ENCODE measurements at regions of chr4 and their contacts with region 1.

Region 1: DNA sequence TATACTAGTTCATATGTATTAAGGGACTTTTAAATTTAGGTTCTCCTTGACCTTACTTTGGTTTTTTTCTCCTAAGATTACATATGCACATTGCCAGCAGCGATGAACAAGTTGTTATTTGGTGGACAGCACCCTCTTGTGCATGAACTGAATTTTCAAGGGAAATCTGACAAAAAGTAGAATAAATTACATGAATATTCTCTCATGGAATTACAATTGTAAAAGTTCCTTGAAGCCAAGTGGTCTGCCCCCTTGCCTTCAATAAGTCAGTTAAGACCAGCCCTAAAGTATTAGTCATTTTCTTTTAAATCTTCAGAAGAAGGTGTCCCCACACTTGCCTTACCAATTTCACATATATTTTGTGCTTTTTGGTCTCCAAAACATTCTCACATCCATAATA is 30.7 kb upstream of the SMARCA5 start:
- DNase-seq: peak; percentile 74
- ATAC-seq: peak; percentile 49
- H3K4me3 ChIP-seq: no peak overlapping the region
- H3K27ac ChIP-seq: no peak overlapping the region
- H3K4me1 ChIP-seq: no peaks in the 10 kb centered on the region
- H3K27me3 ChIP-seq: no peaks in the 10 kb centered on the region
- CTCF ChIP-seq: peak; percentile 86

Region 2: GRCh38 chr4:143207557-143207956 is 275.3 kb before region 1 on chr4:
- CTCF ChIA-PET with region 1: interaction called, 3 read pairs
- POLR2A ChIA-PET with region 1: no interaction called
- intact Hi-C with region 1: loop called (anchors 1 kb)
- DNase-seq: peak; percentile 44
- ATAC-seq: no peak
- H3K4me3 ChIP-seq: no peak overlapping the region
- H3K27ac ChIP-seq: no peak overlapping the region
- H3K4me1 ChIP-seq: no peaks in the 10 kb centered on the region
- H3K27me3 ChIP-seq: no peaks in the 10 kb centered on the region
- CTCF ChIP-seq: peak; percentile 56

Region 3: GRCh38 chr4:143399113-143399949 is 83.5 kb before region 1 on chr4:
- CTCF ChIA-PET with region 1: no interaction called
- POLR2A ChIA-PET with region 1: no interaction called
- intact Hi-C with region 1: loop called (anchors 2 kb)
- DNase-seq: peak; percentile 75
- ATAC-seq: no peak
- H3K4me3 ChIP-seq: no peak overlapping the region
- H3K27ac ChIP-seq: no peak overlapping the region
- H3K4me1 ChIP-seq: peaks cover 16% of the 10 kb centered on the region
- H3K27me3 ChIP-seq: no peaks in the 10 kb centered on the region
- CTCF ChIP-seq: peak; percentile 92